ENCODE measurements at regions of chr1 and their contacts with region 1.

Region 1: DNA sequence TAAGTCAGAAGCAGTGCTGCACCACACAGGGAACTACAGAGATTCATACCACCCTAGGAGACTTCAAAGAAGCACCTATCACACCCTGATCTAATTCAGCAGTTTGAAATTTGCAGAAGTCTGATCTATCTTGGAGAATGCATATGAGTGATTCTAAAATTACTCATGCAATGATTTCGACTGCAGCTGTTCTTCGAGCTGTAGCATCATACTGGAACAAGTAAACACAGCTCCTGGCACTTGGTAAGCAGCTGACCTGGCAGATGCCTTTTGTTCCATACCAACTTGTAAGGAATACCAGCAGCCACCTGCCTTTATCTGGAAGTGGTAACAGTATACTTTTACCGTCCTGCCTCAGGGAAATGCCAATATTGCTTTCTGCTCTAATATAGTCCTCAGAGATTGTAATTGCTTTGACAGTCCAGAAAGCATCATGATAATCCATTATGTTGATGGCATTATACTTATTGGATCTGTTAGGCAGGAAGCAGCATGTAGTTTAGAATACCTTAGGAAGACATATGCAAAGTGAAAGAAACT is 25.7 kb downstream of the AADACL4 start:
- DNase-seq: peak; percentile 90 to 93
- ATAC-seq: peak; percentile 95 to 98
- H3K4me3 ChIP-seq: no peak overlapping the region
- H3K27ac ChIP-seq: peak overlapping the region; percentile 89 to 97 (median 96)
- H3K4me1 ChIP-seq: peaks cover 30 to 33% of the 10 kb centered on the region in 2 donors
- H3K27me3 ChIP-seq: no peaks in the 10 kb centered on the region
- CTCF ChIP-seq: peak in 1 of 5 experiments; percentile 9
- POLR2A ChIP-seq: peak in 1 of 2 donors; percentile 52

Region 2: GRCh38 chr1:11990303-11991032 is 679.1 kb before region 1 on chr1:
- in situ Hi-C with region 1: no loop called
- intact Hi-C with region 1: loop called (anchors 5 kb)
- DNase-seq: peak; percentile 86 to 91
- ATAC-seq: peak; percentile 87 to 90
- H3K4me3 ChIP-seq: no peak overlapping the region
- H3K27ac ChIP-seq: peak overlapping the region; percentile 91 to 98 (median 93)
- H3K4me1 ChIP-seq: peaks cover 35 to 53% of the 10 kb centered on the region in 2 donors
- H3K27me3 ChIP-seq: no peaks in the 10 kb centered on the region
- CTCF ChIP-seq: no peak
- POLR2A ChIP-seq: no peak

Region 3: GRCh38 chr1:12229835-12230548 is 439.6 kb before region 1 on chr1 and contains the start of gene VPS13D:
- in situ Hi-C with region 1: no loop called
- intact Hi-C with region 1: loop called (anchors 5 kb)
- DNase-seq: peak; percentile 68 to 74
- ATAC-seq: peak; percentile 63 to 71
- H3K4me3 ChIP-seq: peak within 1 kb of the TSS; percentile 82 to 100 (median 94)
- H3K27ac ChIP-seq: peak within 1 kb of the TSS; percentile 97 to 99 (median 98)
- H3K4me1 ChIP-seq: peaks cover 25 to 28% of the 10 kb centered on the region in 2 donors
- H3K27me3 ChIP-seq: no peaks in the 10 kb centered on the region
- CTCF ChIP-seq: peak; percentile 89 to 99 (median 98)
- POLR2A ChIP-seq: peak; percentile 90 to 93
- total RNA-seq, gene VPS13D: 60.9 to 91.6 (median 71.6) TPM

Region 4: DNA sequence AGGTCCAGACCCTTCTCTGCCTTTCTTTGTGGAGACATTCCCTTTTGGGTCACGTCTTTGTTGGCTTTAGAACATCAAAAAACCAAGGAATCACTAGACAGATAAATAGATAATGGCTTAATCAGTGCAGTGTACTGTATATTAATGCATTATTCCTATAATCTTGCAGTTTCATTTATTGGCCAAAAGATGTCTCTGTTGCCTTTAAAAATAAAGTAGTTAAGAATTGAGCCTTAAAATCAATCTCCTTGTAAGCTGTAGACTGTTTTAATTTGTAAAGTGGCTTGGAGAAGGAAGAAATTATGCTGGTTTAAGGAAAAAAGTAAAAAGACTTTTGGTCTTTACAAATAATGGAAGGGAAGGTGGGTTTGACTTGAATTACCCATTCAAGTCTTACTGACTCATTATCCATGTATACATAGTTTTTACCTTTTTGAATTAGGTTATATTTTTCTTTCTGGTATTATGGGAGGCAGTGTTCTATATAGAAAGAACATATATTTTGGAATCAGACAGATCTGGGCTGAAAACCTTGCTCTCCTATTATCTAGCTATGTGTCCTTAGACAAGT is 355.2 kb before region 1 on chr1:
- in situ Hi-C with region 1: loop called in 1 of 4 experiments (anchors 10 kb)
- intact Hi-C with region 1: no loop called
- DNase-seq: no peak
- ATAC-seq: peak; percentile 40 to 62
- H3K4me3 ChIP-seq: no peak overlapping the region
- H3K27ac ChIP-seq: peak overlapping the region; percentile 18 to 48 (median 42)
- H3K4me1 ChIP-seq: peaks cover 15 to 21% of the 10 kb centered on the region in 2 donors
- H3K27me3 ChIP-seq: no peaks in the 10 kb centered on the region
- CTCF ChIP-seq: peak in 2 of 5 experiments; percentile 31 to 47
- POLR2A ChIP-seq: no peak

Region 5: GRCh38 chr1:12454406-12455391 is 214.9 kb before region 1 on chr1:
- in situ Hi-C with region 1: no loop called
- intact Hi-C with region 1: loop called (anchors 5 kb)
- DNase-seq: peak; percentile 85 to 88
- ATAC-seq: peak; percentile 55 to 67
- H3K4me3 ChIP-seq: no peak overlapping the region
- H3K27ac ChIP-seq: peak overlapping the region; percentile 84 to 91 (median 90)
- H3K4me1 ChIP-seq: peaks cover 71 to 84% of the 10 kb centered on the region in 2 donors
- H3K27me3 ChIP-seq: no peaks in the 10 kb centered on the region
- CTCF ChIP-seq: no peak
- POLR2A ChIP-seq: peak in 1 of 2 donors; percentile 37

Region 6: DNA sequence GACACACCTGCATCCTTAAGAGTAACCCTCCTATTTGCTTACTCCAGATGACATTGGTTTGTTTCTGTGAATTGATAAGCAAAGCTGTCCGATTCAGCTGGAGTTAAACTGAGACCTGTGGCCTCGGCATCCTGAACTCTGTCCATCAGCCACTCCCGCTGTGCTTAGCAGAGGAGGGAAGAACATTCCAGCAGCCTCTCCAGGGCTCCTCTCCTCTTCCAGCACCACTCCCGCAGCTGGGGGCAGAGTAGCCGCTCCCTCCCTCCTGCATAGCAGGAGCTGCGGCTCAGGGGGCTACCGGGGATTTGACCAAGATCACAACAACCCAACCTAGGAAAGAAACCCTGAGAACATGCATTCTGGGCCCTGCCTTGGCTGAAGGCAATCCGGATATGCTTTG is 835.4 kb after region 1 on chr1:
- in situ Hi-C with region 1: no loop called
- intact Hi-C with region 1: loop called (anchors 10 kb)
- DNase-seq: peak in 1 of 2 donors; percentile 53
- ATAC-seq: no peak
- H3K4me3 ChIP-seq: no peak overlapping the region
- H3K27ac ChIP-seq: peak overlapping the region; percentile 90 to 97 (median 94)
- H3K4me1 ChIP-seq: peaks cover 45 to 50% of the 10 kb centered on the region in 2 donors
- H3K27me3 ChIP-seq: no peaks in the 10 kb centered on the region
- CTCF ChIP-seq: no peak
- POLR2A ChIP-seq: no peak